Motor neuron (in vitro differentiated cells): ENCODE measurements at regions of chr2 and their contacts with region 1.

Region 1: GRCh38 chr2:224284134-224284946 is 117.6 kb downstream of the FAM124B start:
- ATAC-seq: peak in 6 of 8 experiments; percentile 19 to 53 (median 34)
- H3K4me3 ChIP-seq: no peak overlapping the region
- H3K27ac ChIP-seq: no peak overlapping the region
- H3K4me1 ChIP-seq: no peaks in the 10 kb centered on the region

Region 2: GRCh38 chr2:223957092-223957851 is 327.1 kb before region 1 on chr2 and contains the start of gene MRPL44:
- in situ Hi-C with region 1: loop called in 1 of 9 experiments (anchors 10 kb)
- ATAC-seq: peak; percentile 97 to 100 (median 99)
- H3K4me3 ChIP-seq: peak within 1 kb of the TSS; percentile 86 to 99 (median 95)
- H3K27ac ChIP-seq: peak within 1 kb of the TSS; percentile 88 to 94
- H3K4me1 ChIP-seq: peaks cover 22 to 42% of the 10 kb centered on the region in 2 donors
- total RNA-seq, gene MRPL44: 35.4 to 46.7 (median 39.9) TPM

Region 3: DNA sequence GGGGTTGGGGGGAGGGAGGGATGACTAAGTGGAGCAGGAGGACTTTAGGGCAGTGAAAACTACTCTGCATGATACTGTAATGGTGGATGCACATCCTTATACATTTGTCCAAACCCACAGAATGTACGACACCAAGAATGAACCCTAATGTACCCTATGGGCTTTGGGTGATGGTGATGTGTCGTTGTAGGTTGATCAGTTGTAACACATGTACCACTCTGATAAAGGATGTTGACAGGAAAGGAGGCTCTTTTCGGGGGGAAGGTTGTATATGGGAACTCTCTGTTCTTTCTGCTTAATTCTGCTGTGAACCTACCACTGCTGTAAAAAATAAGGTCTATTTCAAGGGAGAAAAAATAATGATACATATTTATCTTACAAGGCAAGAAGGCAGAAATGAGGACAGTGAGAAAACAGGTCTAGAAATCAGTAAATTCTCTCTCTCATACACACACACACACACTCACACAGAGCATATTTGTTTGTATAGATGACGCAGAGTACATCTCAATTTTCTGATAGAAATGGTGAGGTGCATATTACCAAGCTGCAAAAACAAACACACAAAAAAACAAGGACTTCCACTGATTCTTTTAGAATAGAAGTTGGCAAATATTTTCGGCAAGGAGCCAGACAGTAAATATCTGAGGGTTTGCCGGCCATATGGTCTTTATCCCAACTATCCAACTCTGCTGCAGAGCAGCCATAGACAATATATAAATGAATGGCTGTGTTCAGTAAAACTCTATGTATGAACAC is 97.4 kb after region 1 on chr2:
- in situ Hi-C with region 1: no loop called
- ATAC-seq: peak in 1 of 8 experiments; percentile 23
- H3K4me3 ChIP-seq: no peak overlapping the region
- H3K27ac ChIP-seq: no peak overlapping the region
- H3K4me1 ChIP-seq: no peaks in the 10 kb centered on the region

Region 4: GRCh38 chr2:224466304-224466895 is 182.1 kb after region 1 on chr2:
- in situ Hi-C with region 1: no loop called
- ATAC-seq: peak; percentile 17 to 97 (median 79)
- H3K4me3 ChIP-seq: no peak overlapping the region
- H3K27ac ChIP-seq: no peak overlapping the region
- H3K4me1 ChIP-seq: peaks cover 4 to 17% of the 10 kb centered on the region in 2 donors